Activated CD4-positive, alpha-beta T cell treated with anti-CD3 and anti-CD28 coated beads, Interleukin-2, amount 10 ng/mL, durations not matched to agents 24 days and 14 days (primary cell): ENCODE measurements at regions of chr3 and their contacts with region 1.

Region 1: DNA sequence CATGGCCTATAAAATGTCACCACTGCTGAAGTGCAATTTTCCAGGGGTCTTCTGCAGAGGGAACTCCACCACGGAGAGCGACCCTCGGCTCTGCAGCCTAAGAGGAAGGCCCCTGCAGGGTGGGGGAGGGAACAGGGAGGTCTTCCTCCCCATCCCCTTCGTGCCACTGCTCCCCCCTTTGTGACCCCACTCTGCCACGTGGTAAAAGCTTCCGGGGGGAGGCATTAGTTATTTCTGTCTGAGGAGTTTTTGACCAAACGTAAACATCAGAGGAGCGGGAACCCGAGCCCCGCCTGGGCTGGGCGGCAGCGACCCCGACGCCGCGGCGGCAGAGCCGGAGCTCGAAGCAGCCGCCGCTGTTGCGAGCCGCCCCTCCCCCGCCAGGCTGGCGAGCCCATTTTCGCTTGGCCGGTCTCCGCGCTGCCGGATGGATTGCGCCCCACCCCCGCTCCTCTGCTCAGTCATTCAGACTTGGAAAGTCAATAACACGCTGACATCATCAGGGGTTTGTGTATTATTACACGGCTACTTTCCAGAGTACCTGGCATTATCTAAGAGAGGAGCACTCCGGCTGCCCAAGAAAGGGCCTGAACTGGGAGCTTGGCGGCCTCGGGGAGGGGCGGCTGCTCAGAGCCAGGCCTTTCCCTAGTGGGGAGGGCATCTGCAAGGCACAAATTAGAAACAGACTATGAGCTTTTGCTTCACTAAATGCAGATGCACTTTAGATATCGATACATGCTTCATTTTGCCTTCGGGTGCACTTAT is 162.5 kb upstream of the TBL1XR1 start:
- DNase-seq: peak; percentile 98
- H3K4me3 Mint-ChIP-seq: peak overlapping the region; percentile 81
- H3K27ac Mint-ChIP-seq: peak overlapping the region; percentile 96
- H3K4me1 Mint-ChIP-seq: peaks cover 53% of the 10 kb centered on the region
- H3K27me3 Mint-ChIP-seq: peaks cover 2% of the 10 kb centered on the region

Region 2: DNA sequence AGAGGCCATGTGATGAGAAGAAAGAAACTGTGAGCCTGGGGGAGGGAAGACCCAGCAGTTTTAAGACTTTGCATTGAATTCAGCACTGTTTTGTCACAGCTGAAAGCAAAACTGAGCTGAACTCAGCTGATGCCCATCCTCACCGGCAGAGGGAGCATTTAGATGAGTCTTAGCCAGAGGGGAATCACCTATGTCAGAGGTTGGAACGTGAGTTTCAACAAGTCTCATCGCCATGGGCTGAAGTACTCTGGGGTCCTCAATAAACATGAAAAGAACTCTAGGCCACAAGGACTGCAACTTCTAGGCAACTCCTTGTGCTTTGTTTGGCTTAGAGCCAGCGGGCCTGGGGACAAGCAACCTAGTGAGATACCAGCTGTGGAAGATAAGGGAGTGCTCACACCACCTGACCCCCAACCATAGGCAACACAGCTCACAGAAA is 487.0 kb before region 1 on chr3:
- intact Hi-C with region 1: loop called (anchors 5 kb)
- DNase-seq: peak; percentile 86
- H3K4me3 Mint-ChIP-seq: no peak overlapping the region
- H3K27ac Mint-ChIP-seq: peak overlapping the region; percentile 18
- H3K4me1 Mint-ChIP-seq: peaks cover 4% of the 10 kb centered on the region
- H3K27me3 Mint-ChIP-seq: peaks cover 2% of the 10 kb centered on the region

Region 3: GRCh38 chr3:177144923-177145780 is 214.6 kb before region 1 on chr3:
- intact Hi-C with region 1: loop called (anchors 2 kb)
- DNase-seq: peak; percentile 81
- H3K4me3 Mint-ChIP-seq: peak overlapping the region; percentile 72
- H3K27ac Mint-ChIP-seq: peak overlapping the region; percentile 82
- H3K4me1 Mint-ChIP-seq: peaks cover 54% of the 10 kb centered on the region
- H3K27me3 Mint-ChIP-seq: no peaks in the 10 kb centered on the region

Region 4: DNA sequence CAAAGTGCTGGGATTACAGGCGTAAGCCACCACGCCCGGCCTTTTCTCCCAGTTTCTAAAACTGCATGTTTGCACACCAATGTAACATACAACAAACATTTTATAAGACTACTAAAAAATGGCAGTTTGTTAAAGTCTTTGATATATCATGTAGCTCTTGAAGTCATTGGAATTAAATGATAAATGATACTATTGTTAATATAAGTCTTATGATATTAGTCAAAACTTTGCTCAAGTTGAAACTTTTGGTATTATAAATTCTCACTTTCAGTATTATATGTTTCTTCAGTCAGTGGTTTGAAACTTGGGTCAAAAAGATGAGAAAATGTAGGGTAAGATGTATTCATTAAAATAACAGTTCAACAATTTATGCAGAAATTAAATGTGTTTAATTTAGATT is 44.9 kb before region 1 on chr3:
- intact Hi-C with region 1: loop called (anchors 1 kb)
- DNase-seq: no peak
- H3K4me3 Mint-ChIP-seq: no peak overlapping the region
- H3K27ac Mint-ChIP-seq: peak overlapping the region; percentile 60
- H3K4me1 Mint-ChIP-seq: peaks cover 14% of the 10 kb centered on the region
- H3K27me3 Mint-ChIP-seq: no peaks in the 10 kb centered on the region

Region 5: GRCh38 chr3:177330779-177331178 is 29.0 kb before region 1 on chr3:
- intact Hi-C with region 1: no loop called
- DNase-seq: no peak
- H3K4me3 Mint-ChIP-seq: no peak overlapping the region
- H3K27ac Mint-ChIP-seq: no peak overlapping the region
- H3K4me1 Mint-ChIP-seq: peaks cover 7% of the 10 kb centered on the region
- H3K27me3 Mint-ChIP-seq: no peaks in the 10 kb centered on the region

Region 6: DNA sequence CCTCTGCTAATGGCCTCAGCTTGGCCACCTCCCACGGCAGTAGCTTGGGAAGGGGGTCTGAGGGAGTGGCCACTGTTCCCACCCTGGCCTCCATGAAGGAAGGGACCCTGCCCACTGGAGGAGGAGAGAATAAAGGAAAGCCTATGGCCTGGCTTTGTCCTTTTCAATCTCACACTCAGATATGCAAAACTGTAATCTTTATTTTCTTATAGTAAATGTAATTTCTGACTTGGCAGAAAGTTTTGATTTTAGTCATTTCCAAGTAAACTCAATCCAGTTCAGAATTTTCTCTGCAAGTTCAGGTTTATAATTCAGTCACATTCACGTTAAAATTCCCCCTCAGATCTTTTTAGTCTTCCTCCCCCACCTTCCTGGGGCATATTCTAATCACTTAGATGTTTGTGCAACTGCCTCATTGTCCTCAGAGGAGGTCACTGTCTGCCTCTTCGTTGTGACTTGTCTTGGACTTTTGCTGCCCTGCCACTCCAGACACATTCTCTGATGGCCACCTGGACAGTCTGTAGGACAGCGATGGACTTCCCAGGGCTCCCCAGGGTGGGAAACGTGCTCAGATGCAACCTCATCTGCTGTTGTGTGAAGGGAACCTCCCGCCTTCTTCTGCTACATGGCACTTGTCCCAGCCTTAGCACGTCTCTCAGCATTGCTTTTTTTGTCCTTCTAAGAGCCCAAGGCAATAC is 60.3 kb after region 1 on chr3:
- intact Hi-C with region 1: loop called (anchors 1 kb)
- DNase-seq: peak; percentile 60
- H3K4me3 Mint-ChIP-seq: no peak overlapping the region
- H3K27ac Mint-ChIP-seq: peak overlapping the region; percentile 79
- H3K4me1 Mint-ChIP-seq: peaks cover 20% of the 10 kb centered on the region
- H3K27me3 Mint-ChIP-seq: no peaks in the 10 kb centered on the region

Region 7: DNA sequence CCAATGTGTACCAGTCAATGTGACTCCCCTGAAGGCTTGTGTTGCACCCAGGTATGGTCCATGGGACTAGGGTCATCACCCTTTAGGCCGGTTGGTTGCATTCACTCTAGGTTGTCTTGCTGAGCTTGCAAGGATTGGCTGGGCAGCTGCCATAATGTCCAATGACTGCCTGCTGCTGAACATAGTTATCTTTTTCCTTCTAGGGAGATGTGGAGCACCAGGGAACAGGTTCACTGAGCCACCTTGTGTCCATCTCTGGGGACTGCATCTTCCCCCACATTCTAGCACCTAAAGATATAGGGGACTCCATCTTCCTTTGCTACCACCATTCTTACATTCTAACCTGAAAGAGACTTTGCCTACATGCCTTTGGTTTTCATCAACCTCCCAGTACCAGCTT is 417.9 kb after region 1 on chr3:
- intact Hi-C with region 1: loop called (anchors 5 kb)
- DNase-seq: peak; percentile 76
- H3K4me3 Mint-ChIP-seq: no peak overlapping the region
- H3K27ac Mint-ChIP-seq: no peak overlapping the region
- H3K4me1 Mint-ChIP-seq: peaks cover 10% of the 10 kb centered on the region
- H3K27me3 Mint-ChIP-seq: no peaks in the 10 kb centered on the region

Region 8: DNA sequence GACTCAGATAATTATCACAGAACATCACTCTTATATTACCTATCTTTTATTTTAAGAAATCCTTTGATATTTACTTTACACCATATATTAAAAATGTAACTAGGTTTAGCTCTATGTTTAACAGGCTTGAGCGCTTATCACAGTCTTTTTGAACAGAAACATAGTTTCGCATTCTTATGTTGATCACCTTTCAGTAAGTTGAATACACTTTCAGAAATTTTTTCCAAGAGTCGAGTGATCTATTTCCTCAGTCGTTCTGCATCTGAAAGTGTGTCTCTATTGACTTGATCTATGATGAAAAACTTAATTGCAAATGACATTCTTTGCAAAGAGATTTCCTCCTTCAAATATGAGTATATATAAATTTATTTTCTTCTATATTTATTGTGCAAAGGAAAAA is 659.9 kb after region 1 on chr3:
- intact Hi-C with region 1: no loop called
- DNase-seq: no peak
- H3K4me3 Mint-ChIP-seq: no peak overlapping the region
- H3K27ac Mint-ChIP-seq: no peak overlapping the region
- H3K4me1 Mint-ChIP-seq: peaks cover 2% of the 10 kb centered on the region
- H3K27me3 Mint-ChIP-seq: no peaks in the 10 kb centered on the region

Region 9: DNA sequence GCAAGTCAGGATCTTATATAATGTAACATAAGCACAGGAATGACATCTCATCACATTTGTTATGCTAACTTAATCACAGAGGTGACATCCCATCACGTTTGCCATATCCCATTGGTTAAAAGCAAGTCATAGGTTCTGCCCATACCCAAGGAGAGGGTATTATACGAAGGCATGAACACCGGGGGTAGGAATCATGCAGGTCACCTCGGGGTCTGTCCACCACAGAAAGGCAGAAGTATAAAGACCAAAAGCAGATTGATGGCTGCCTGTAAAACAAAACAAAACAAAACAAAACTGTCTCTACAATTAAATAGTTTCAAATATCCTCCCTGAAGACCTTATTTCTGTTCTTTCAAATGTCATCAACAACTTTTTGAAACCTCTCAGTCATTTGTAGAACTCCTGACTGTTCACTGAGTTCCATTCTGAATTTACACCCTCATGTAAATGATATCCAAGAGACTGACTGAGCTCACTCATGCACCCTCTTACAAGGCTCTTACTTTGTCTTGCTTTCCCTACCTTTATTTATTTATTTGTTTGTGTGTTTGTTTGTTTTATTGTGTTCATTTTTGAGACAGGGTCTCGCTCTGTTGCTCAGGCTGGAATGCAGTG is 1940.3 kb after region 1 on chr3:
- intact Hi-C with region 1: no loop called
- DNase-seq: no peak
- H3K4me3 Mint-ChIP-seq: no peak overlapping the region
- H3K27ac Mint-ChIP-seq: no peak overlapping the region
- H3K4me1 Mint-ChIP-seq: no peaks in the 10 kb centered on the region
- H3K27me3 Mint-ChIP-seq: peaks cover 14% of the 10 kb centered on the region